Naive thymus-derived CD4-positive, alpha-beta T cell (primary cell): ENCODE measurements at regions of chr2 and their contacts with region 1.

Region 1: DNA sequence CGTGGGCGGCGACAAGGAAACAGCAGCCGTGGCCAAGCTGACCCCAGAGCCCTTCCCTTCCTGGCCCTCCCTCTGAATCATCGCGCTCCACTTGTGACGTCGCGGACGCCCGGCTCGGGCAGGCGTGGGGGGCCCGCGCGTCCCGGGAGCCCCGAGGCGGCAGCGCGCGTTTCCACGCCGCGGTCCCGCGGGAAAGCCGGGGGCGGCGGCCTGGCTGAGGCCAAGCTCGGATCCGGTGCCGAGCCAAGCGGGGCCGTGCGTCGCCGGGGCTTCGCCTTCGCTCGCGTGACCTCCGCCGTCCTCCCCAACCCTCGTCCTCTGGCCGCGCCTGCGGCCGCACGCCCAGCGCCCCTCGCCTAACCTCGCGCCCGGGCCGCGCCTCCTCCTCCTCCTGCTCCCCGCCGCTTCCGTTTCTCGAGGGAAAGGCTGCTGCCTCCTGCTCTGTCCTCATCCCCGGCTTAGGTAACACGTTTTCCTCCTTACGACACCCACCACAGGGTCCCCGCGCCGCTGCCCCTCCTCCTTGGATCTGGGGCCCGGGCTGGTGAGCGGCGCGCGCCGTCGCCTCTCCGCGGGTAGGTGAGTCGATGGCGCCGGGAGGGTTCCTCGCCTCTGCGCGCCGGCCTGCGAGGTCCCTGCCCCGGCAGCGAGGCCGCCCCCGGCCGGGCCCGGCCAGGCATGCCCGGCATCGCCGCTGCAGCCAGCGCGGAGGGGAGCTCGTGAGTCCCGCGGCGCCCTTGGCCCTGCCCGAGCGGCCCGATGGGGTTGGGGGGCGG is at the start of gene INPP1:
- DNase-seq: peak; percentile 9 to 57 (median 28)
- ATAC-seq: peak; percentile 86
- H3K4me3 ChIP-seq: peak within 1 kb of the TSS; percentile 66
- H3K4me3 Mint-ChIP-seq: peak within 1 kb of the TSS; percentile 64 to 94 (median 88)
- H3K27ac ChIP-seq: peak within 1 kb of the TSS; percentile 26
- H3K27ac Mint-ChIP-seq: peak within 1 kb of the TSS in 6 of 9 donors; percentile 32 to 74 (median 58)
- H3K4me1 ChIP-seq: peaks cover 3 to 11% of the 10 kb centered on the region in 2 donors
- H3K4me1 Mint-ChIP-seq: peaks cover 5 to 24% (median 12%) of the 10 kb centered on the region in 7 donors
- H3K27me3 ChIP-seq: no peaks in the 10 kb centered on the region
- H3K27me3 Mint-ChIP-seq: peaks cover 0 to 30% (median 4%) of the 10 kb centered on the region in 5 donors
- total RNA-seq, gene INPP1: 1.6 to 6.7 (median 2.5) TPM

Region 2: DNA sequence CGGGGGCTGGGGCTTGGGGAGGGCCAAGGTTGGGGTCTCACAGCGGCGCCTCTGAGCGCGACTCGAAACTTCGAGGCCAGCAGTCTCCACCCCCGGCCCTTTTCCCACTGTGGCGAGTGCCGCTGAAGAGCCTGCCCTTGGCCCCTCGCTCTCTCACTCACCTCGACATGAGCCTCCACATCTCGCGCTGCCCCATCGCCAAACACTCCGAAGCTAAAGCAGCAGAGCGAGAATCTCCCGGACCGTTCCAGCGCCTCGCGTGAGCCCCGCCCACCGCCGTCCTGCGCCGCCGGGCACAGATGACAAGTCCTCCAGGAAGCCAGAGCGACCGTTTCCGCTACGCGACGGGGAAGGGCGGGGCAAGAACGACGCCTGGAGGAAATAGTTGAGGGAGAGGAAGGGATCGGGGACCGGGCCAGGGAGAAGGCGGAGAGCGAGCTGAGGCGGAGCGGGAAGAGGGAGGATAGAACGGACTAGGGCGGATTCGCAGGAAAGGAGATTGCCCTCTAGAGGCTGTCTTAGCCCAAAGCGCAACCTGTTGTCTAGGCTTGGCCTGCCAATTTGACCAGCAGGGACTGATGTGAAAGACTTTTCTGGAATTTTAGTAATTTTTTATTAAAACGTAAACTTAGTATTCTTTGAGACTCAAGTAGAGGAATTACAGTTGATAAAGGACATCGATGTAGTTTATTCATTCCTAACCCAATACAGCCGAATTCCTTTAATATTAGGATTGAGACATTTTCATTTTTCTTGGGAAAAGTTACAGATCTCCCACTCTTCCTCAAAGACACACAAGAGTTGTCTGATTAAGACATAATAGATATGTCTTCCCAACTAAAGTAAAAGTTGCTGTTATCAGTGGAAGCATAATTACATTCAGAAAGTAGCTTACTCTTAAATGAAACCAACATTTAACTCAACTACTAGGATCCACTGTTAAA is 23.9 kb before region 1 on chr2 and contains the start of gene HIBCH:
- CTCF ChIA-PET with region 1: no interaction called
- POLR2A ChIA-PET with region 1: no interaction called
- intact Hi-C with region 1: loop called (anchors 1 kb)
- DNase-seq: peak; percentile 56 to 88 (median 68)
- ATAC-seq: peak; percentile 94
- H3K4me3 ChIP-seq: peak within 1 kb of the TSS; percentile 83
- H3K4me3 Mint-ChIP-seq: peak within 1 kb of the TSS; percentile 85 to 100 (median 97)
- H3K27ac ChIP-seq: peak within 1 kb of the TSS; percentile 82
- H3K27ac Mint-ChIP-seq: peak within 1 kb of the TSS; percentile 91 to 99 (median 95)
- H3K4me1 ChIP-seq: peaks cover 8 to 13% of the 10 kb centered on the region in 2 donors
- H3K4me1 Mint-ChIP-seq: peaks cover 27 to 54% (median 48%) of the 10 kb centered on the region in 7 donors
- H3K27me3 ChIP-seq: no peaks in the 10 kb centered on the region
- H3K27me3 Mint-ChIP-seq: no peaks in the 10 kb centered on the region
- total RNA-seq, gene HIBCH: 11.3 to 25.0 (median 21.6) TPM

Region 3: GRCh38 chr2:190360561-190360960 is 16.9 kb after region 1 on chr2:
- CTCF ChIA-PET with region 1: interaction called, 4 read pairs
- POLR2A ChIA-PET with region 1: interaction called, 4 read pairs
- intact Hi-C with region 1: loop called in 1 of 2 experiments (anchors 2 kb)
- DNase-seq: no peak
- ATAC-seq: no peak
- H3K4me3 ChIP-seq: peak overlapping the region; percentile 61
- H3K4me3 Mint-ChIP-seq: peak overlapping the region; percentile 56 to 99 (median 92)
- H3K27ac ChIP-seq: peak overlapping the region; percentile 71
- H3K27ac Mint-ChIP-seq: peak overlapping the region; percentile 42 to 97 (median 94)
- H3K4me1 ChIP-seq: peaks cover 0 to 3% of the 10 kb centered on the region in 2 donors
- H3K4me1 Mint-ChIP-seq: peaks cover 10 to 39% (median 26%) of the 10 kb centered on the region in 7 donors
- H3K27me3 ChIP-seq: no peaks in the 10 kb centered on the region
- H3K27me3 Mint-ChIP-seq: no peaks in the 10 kb centered on the region

Region 4: DNA sequence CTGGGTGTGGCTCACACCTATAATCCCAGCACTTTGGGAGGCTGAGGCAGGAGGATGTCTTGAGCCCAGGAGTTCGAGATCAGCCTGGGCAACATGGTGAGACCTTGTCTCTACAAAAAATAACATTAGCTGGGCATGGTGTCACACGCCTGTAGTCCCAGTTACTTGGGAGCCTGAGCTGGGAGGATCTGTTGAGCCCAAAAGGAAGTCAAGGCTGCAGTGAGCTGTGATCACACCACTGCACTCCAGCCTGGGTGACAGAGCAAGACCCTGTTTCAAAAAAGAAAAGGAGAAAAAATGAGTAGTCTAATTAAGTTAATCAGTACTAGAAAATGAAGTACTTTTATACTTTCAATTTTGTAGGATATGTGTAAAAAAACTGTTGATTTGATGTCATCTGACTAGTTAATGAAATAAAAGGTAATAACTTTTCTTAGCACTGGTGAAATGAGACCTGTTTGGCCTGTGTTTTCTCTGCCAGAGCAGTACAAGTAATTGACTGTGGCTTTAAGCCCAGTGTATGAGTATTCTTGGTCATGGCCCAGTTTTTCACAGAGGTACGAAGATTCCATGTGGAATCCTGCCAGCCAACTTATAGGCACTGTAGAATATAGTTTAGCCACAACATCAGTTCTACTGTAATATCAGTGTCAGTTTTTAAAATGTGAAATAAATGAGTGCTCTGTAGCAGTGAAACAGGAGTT is 100.2 kb after region 1 on chr2:
- CTCF ChIA-PET with region 1: no interaction called
- POLR2A ChIA-PET with region 1: no interaction called
- intact Hi-C with region 1: no loop called
- DNase-seq: no peak
- ATAC-seq: no peak
- H3K4me3 ChIP-seq: no peak overlapping the region
- H3K4me3 Mint-ChIP-seq: peak overlapping the region in 7 of 10 donors; percentile 4 to 41 (median 17)
- H3K27ac ChIP-seq: no peak overlapping the region
- H3K27ac Mint-ChIP-seq: peak overlapping the region in 4 of 9 donors; percentile 5 to 90 (median 45)
- H3K4me1 ChIP-seq: peaks cover 5 to 17% of the 10 kb centered on the region in 2 donors
- H3K4me1 Mint-ChIP-seq: peaks cover 34 to 91% (median 88%) of the 10 kb centered on the region in 7 donors
- H3K27me3 ChIP-seq: no peaks in the 10 kb centered on the region
- H3K27me3 Mint-ChIP-seq: no peaks in the 10 kb centered on the region